ENCODE measurements at regions of chr6 and their contacts with region 1.

Region 1: DNA sequence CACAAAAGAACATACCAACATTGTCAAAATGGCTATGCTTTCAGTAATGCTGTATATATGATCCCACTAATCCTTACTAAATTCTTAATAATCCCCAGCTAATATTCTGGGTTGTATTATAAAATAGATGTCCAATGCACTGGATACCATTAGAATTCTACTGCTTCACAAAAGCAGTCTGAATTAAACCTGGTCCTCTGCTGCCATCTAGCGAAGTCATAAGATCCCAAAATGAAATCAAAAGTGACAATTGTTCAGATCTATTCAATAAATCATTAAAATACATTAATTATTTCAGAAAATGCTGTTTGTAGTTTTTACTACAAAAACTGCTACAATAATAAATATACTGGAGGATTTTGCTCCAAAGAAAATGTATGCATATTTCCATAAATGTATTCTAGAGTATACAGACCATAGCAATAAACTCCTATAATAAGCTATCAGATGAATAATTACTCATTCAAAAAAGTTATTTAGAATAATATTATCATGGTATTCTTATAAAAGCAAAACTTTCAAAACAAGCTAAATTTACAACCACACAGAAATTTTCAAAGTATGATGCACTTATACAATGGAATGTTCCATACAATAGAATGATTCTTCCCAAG is 92.6 kb downstream of the RNGTT start:
- DNase-seq: peak; percentile 17
- H3K4me3 Mint-ChIP-seq: no peak overlapping the region
- H3K27ac Mint-ChIP-seq: no peak overlapping the region
- H3K4me1 Mint-ChIP-seq: peaks cover 44% of the 10 kb centered on the region
- H3K27me3 Mint-ChIP-seq: no peaks in the 10 kb centered on the region

Region 2: DNA sequence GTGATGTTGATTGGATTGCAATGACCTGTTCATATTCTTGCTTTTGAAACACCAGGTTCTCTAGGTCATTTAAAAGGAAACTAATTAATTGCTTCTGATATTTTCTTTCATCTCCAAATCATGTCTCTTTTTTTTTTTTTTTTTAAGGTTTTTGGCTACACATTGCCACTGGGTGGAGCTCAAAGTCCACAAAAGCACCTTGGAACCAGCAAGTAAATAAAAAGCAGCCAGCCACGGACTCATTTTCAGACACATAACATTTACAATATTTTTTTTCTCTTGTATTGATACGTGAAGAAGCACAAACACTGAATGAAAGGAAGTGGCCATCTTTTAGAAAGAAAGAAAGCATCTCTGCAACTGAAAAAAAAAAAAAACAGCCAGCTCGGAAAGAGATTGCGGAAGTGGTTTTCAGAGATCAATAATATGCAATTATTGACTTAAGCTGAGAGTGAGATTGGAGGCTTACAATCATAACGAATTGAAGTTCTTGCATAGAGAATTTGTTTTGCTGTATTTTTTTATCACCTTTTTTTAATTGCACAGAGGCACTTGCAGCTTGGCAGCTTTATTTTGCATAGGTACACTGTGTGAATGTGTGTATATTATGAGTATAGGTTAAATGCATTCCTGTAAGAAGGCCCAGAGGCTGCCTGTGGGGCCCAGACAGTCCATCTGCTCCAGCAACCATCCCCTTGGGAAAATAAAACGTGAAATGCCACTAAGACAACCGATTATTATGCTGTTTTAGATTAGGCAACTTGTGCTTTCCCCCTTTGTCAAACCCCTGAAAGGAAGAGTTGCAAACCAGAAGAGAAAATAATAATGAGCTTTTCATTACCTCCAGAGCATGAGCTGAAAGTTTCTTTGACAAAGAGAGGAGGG is 1804.1 kb before region 1 on chr6:
- intact Hi-C with region 1: loop called (anchors 5 kb)
- DNase-seq: no peak
- H3K4me3 Mint-ChIP-seq: no peak overlapping the region
- H3K27ac Mint-ChIP-seq: no peak overlapping the region
- H3K4me1 Mint-ChIP-seq: no peaks in the 10 kb centered on the region
- H3K27me3 Mint-ChIP-seq: peaks cover 10% of the 10 kb centered on the region

Region 3: DNA sequence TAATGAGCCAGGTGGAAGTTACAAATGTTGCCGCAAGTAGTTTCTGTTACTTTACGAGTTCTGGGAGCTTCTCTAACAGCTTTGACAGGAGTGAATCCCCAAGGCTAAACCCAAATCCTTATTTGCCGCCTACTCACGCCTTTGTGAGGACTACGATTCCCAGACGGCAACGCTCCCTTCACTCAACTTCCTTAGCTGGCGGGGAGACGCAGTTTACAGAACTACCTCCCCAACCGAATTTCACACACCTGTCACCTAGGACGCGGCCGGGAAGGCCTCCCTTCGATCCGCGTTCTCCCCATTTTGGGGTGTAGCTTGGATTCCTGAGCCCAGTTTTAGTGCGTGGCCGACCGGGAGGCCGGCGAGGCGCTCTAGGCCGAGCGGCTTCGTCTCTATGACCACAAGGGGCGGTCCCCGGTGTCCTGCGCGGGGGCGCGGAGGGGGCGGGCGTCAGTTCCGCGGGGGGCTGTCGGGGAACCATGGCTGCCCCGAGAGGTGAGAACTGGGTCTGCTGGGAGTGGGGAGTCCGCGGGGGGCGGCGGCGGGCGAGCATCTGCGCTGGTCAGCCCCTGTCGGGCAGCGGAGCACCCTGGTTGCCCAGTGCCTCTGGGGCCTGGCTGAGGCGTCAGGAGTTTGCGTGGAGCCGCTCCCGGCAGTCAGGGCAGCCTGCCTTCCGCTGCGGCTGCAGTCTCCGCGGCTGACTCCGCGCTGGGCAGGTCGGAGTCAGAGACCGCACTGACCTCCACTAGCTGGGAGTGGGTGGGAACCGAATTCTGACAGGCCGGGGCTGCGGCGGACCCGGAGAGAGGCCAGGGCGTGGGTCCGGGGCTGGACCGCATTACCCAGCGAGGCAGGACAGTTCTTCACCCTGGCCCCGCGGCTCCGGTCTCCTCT is 1398.1 kb before region 1 on chr6 and contains the start of gene SLC35A1:
- intact Hi-C with region 1: loop called (anchors 5 kb)
- DNase-seq: peak; percentile 77
- H3K4me3 Mint-ChIP-seq: peak within 1 kb of the TSS; percentile 98
- H3K27ac Mint-ChIP-seq: peak within 1 kb of the TSS; percentile 97
- H3K4me1 Mint-ChIP-seq: peaks cover 14% of the 10 kb centered on the region
- H3K27me3 Mint-ChIP-seq: peaks cover 7% of the 10 kb centered on the region
- total RNA-seq, gene SLC35A1: 9.7 and 10.2 TPM in 2 replicates

Region 4: GRCh38 chr6:87832025-87832825 is 1038.6 kb before region 1 on chr6:
- intact Hi-C with region 1: loop called (anchors 1 kb)
- DNase-seq: no peak
- H3K4me3 Mint-ChIP-seq: peak overlapping the region; percentile 63
- H3K27ac Mint-ChIP-seq: no peak overlapping the region
- H3K4me1 Mint-ChIP-seq: peaks cover 14% of the 10 kb centered on the region
- H3K27me3 Mint-ChIP-seq: peaks cover 6% of the 10 kb centered on the region

Region 5: DNA sequence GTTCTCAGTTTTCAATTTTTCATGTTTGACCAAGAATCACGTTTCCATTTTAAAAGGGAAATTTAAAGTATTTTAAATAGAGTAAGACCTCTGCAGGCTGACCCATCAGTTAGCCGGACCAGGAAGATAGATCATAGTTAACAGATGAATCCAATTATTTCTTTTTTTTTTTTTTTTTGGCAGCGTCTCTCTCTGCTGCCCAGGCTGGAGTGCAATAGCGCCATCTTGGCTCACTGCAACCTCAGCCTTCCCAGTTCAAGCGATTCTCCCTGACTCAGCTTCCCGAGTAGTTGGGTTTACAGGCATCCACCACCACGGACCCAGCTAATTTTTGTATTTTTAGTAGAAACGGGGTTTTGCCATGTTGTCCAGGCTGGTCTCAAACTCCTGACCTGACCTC is 448.0 kb before region 1 on chr6:
- intact Hi-C with region 1: no loop called
- DNase-seq: no peak
- H3K4me3 Mint-ChIP-seq: no peak overlapping the region
- H3K27ac Mint-ChIP-seq: no peak overlapping the region
- H3K4me1 Mint-ChIP-seq: no peaks in the 10 kb centered on the region
- H3K27me3 Mint-ChIP-seq: no peaks in the 10 kb centered on the region

Region 6: GRCh38 chr6:88780714-88781389 is 90.0 kb before region 1 on chr6:
- intact Hi-C with region 1: loop called (anchors 2 kb)
- DNase-seq: peak; percentile 31
- H3K4me3 Mint-ChIP-seq: no peak overlapping the region
- H3K27ac Mint-ChIP-seq: no peak overlapping the region
- H3K4me1 Mint-ChIP-seq: peaks cover 5% of the 10 kb centered on the region
- H3K27me3 Mint-ChIP-seq: no peaks in the 10 kb centered on the region

Region 7: GRCh38 chr6:88823998-88824397 is 46.8 kb before region 1 on chr6:
- intact Hi-C with region 1: no loop called
- DNase-seq: no peak
- H3K4me3 Mint-ChIP-seq: no peak overlapping the region
- H3K27ac Mint-ChIP-seq: no peak overlapping the region
- H3K4me1 Mint-ChIP-seq: no peaks in the 10 kb centered on the region
- H3K27me3 Mint-ChIP-seq: no peaks in the 10 kb centered on the region